ENCODE measurements at regions of chr20 and their contacts with region 1.

Region 1: GRCh38 chr20:37192137-37192854 is 12.9 kb upstream of the MROH8 start:
- DNase-seq: no peak
- ATAC-seq: peak; percentile 88
- H3K4me3 ChIP-seq: no peak overlapping the region
- H3K27ac ChIP-seq: no peak overlapping the region
- H3K4me1 ChIP-seq: peaks cover 17% of the 10 kb centered on the region
- H3K27me3 ChIP-seq: no peaks in the 10 kb centered on the region
- CTCF ChIP-seq: peak; percentile 80 to 92 (median 91)
- EP300 ChIP-seq: no peak
- POLR2A ChIP-seq: no peak
- RAD21 ChIP-seq: peak; percentile 17; the same call in 1 of the 2 replicates

Region 2: DNA sequence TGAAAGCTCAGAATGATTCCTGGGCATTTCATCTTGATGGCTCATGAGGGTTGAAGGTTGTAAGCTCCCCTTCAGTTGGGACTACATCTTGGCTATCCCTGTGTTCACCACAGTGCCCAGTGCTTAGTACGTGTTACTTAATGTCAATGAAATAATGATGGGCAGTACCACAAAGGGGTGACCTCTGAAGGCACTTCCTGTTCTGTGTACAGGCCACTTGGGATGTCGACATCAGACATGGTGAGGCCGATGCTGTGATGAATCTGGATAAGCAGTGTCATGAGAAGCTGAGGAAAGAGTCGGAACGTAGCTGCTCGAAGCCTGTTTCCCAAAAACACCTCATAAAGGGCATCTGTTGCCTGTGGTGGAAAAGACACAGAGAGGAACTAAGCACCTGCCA is 68.9 kb before region 1 on chr20:
- CTCF ChIA-PET with region 1: no interaction called
- POLR2A ChIA-PET with region 1: no interaction called
- RAD21 ChIA-PET with region 1: no interaction called
- SMC1A ChIA-PET with region 1: no interaction called
- in situ Hi-C with region 1: no loop called
- intact Hi-C with region 1: no loop called
- DNase-seq: no peak
- ATAC-seq: no peak
- H3K4me3 ChIP-seq: no peak overlapping the region
- H3K27ac ChIP-seq: no peak overlapping the region
- H3K4me1 ChIP-seq: no peaks in the 10 kb centered on the region
- H3K27me3 ChIP-seq: no peaks in the 10 kb centered on the region
- CTCF ChIP-seq: no peak
- EP300 ChIP-seq: no peak
- POLR2A ChIP-seq: no peak
- RAD21 ChIP-seq: no peak

Region 3: GRCh38 chr20:37178839-37179670 is 13.2 kb before region 1 on chr20 and contains the starts of genes MROH8 and RPN2:
- CTCF ChIA-PET with region 1: interaction called, 51 read pairs
- POLR2A ChIA-PET with region 1: interaction called, 22 read pairs
- RAD21 ChIA-PET with region 1: interaction called, 17 read pairs
- SMC1A ChIA-PET with region 1: interaction called, 21 read pairs
- in situ Hi-C with region 1: no loop called
- intact Hi-C with region 1: no loop called
- DNase-seq: peak; percentile 83
- ATAC-seq: peak; percentile 98
- H3K4me3 ChIP-seq: peak within 1 kb of the TSS; percentile 92
- H3K27ac ChIP-seq: peak within 1 kb of the TSS; percentile 98
- H3K4me1 ChIP-seq: peaks cover 7% of the 10 kb centered on the region
- H3K27me3 ChIP-seq: no peaks in the 10 kb centered on the region
- CTCF ChIP-seq: no peak
- EP300 ChIP-seq: 0 out of 4 replicates have a peak, but pooled peaks of 1 of the 2 experiments have one; percentile 10
- POLR2A ChIP-seq: peak; percentile 92
- RAD21 ChIP-seq: no peak
- polyA plus RNA-seq, gene MROH8: 0.16 to 0.93 TPM
- polyA plus RNA-seq, gene RPN2: 274 to 365 TPM

Region 4: DNA sequence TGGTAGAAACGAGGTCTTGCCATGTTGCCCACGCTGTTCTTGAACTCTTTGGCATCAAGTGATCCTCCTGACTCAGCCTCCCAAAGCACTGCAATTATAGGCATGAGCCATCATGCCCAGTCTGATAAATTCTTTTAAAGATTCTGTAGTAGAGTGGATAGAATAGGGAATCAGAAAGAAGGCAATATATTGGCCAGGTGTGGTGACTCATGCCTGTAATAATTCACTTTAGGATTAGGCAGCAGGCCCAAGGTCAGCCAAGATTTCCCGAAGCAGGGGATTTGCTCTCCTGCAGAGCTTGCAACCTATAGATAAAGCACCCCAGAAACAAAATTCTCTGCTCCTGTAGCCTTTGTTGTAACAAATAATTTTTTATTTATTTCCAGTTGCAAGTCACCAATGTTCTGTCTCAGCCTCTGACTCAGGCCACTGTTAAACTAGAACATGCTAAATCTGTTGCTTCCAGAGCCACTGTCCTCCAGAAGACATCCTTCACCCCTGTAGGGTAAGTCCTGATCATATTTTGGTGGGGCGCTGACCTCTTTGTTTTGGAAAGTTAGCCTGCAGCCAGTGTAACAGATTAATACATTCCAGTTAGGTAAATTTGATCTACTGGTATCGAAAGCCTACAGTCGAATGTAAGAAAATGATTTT is 17.5 kb after region 1 on chr20:
- CTCF ChIA-PET with region 1: interaction called, 15 read pairs
- POLR2A ChIA-PET with region 1: interaction called, 3 read pairs
- RAD21 ChIA-PET with region 1: interaction called, 4 read pairs
- SMC1A ChIA-PET with region 1: interaction called, 10 read pairs
- in situ Hi-C with region 1: no loop called
- intact Hi-C with region 1: no loop called
- DNase-seq: no peak
- ATAC-seq: no peak
- H3K4me3 ChIP-seq: no peak overlapping the region
- H3K27ac ChIP-seq: no peak overlapping the region
- H3K4me1 ChIP-seq: no peaks in the 10 kb centered on the region
- H3K27me3 ChIP-seq: no peaks in the 10 kb centered on the region
- CTCF ChIP-seq: no peak
- EP300 ChIP-seq: no peak
- POLR2A ChIP-seq: no peak
- RAD21 ChIP-seq: no peak

Region 5: DNA sequence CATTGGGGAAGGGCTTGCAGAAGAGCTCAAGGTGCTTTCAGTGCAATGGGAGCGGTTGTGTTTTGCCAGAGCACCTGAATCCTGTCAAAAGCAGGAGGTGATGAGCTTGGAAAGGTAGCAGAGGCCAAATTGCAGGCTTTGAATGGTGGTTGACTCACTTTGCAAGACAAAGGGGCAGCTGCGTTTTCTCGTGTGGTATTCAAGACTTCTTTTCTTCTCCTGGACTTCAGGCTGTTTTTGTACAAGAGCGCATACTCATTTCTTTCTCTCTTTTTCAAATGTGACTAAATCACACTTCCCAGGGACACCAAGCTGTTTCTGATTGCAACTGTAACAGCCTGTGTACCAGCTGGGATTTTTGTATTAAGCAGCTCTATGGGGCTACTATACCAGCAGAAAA is 37.1 kb after region 1 on chr20:
- CTCF ChIA-PET with region 1: interaction called, 5 read pairs
- POLR2A ChIA-PET with region 1: no interaction called
- RAD21 ChIA-PET with region 1: interaction called, 5 read pairs
- SMC1A ChIA-PET with region 1: interaction called, 10 read pairs
- in situ Hi-C with region 1: no loop called
- intact Hi-C with region 1: no loop called
- DNase-seq: no peak
- ATAC-seq: no peak
- H3K4me3 ChIP-seq: no peak overlapping the region
- H3K27ac ChIP-seq: no peak overlapping the region
- H3K4me1 ChIP-seq: no peaks in the 10 kb centered on the region
- H3K27me3 ChIP-seq: no peaks in the 10 kb centered on the region
- CTCF ChIP-seq: no peak
- EP300 ChIP-seq: no peak
- POLR2A ChIP-seq: no peak
- RAD21 ChIP-seq: no peak

Region 6: GRCh38 chr20:37298190-37298939 is 106.1 kb after region 1 on chr20:
- CTCF ChIA-PET with region 1: no interaction called
- POLR2A ChIA-PET with region 1: no interaction called
- RAD21 ChIA-PET with region 1: no interaction called
- SMC1A ChIA-PET with region 1: no interaction called
- in situ Hi-C with region 1: no loop called
- intact Hi-C with region 1: no loop called
- DNase-seq: no peak
- ATAC-seq: peak; percentile 64
- H3K4me3 ChIP-seq: no peak overlapping the region
- H3K27ac ChIP-seq: peak overlapping the region; percentile 69
- H3K4me1 ChIP-seq: peaks cover 46% of the 10 kb centered on the region
- H3K27me3 ChIP-seq: no peaks in the 10 kb centered on the region
- CTCF ChIP-seq: no peak
- EP300 ChIP-seq: no peak; a peak in 1 of 4 replicates
- POLR2A ChIP-seq: no peak
- RAD21 ChIP-seq: no peak

Region 7: DNA sequence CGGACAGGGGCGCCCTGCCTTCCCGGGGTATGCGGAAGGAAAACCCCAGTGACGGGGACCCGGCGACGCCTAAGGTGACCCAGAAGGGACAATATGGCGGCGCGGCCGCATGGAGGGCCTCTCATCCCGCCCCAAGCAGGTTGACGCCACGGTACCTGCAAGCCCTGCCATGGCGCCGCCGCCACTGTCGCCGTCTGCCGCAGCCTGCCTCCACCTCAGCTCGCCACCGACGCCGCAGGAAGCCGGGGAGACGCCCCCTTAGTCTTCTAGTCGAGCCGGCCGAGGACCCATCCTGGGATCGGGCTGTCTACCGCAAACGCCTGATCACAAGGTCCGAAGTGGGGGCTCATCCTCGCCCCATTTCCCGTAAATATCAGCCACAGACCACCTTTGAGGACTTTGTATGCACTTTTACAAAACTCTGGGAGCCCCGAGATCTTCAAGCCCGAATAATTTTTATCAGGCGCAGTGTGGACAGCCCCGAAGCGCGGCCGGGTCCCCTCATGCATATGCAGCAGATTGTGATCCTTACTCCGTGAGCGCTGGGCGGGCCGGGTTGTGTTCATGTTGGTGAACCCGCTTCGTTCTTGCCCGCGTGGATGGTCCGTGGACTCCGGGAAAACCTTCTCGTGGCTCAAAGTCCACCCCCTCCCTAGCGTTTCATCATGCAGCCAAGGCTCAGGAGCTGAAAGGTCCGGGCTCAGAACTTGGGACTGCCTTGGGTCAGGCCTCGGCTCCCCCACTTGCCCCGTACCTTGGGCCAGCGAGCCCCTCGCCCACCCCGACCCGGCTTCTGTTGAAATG is 335.5 kb after region 1 on chr20 and contains the start of gene BLCAP:
- CTCF ChIA-PET with region 1: interaction called, 200 read pairs
- POLR2A ChIA-PET with region 1: no interaction called
- RAD21 ChIA-PET with region 1: interaction called, 20 read pairs
- SMC1A ChIA-PET with region 1: interaction called, 33 read pairs
- in situ Hi-C with region 1: loop called (anchors 5 kb)
- intact Hi-C with region 1: no loop called
- DNase-seq: peak; percentile 69
- ATAC-seq: peak; percentile 92
- H3K4me3 ChIP-seq: peak within 1 kb of the TSS; percentile 89
- H3K27ac ChIP-seq: peak within 1 kb of the TSS; percentile 100
- H3K4me1 ChIP-seq: peaks cover 16% of the 10 kb centered on the region
- H3K27me3 ChIP-seq: no peaks in the 10 kb centered on the region
- CTCF ChIP-seq: no peak
- EP300 ChIP-seq: no peak
- POLR2A ChIP-seq: peak; percentile 98
- RAD21 ChIP-seq: no peak
- polyA plus RNA-seq, gene BLCAP: 24.6 to 37.7 TPM

Region 8: GRCh38 chr20:38210741-38211140 is 1018.4 kb after region 1 on chr20:
- CTCF ChIA-PET with region 1: no interaction called
- POLR2A ChIA-PET with region 1: no interaction called
- RAD21 ChIA-PET with region 1: no interaction called
- SMC1A ChIA-PET with region 1: no interaction called
- in situ Hi-C with region 1: no loop called
- intact Hi-C with region 1: no loop called
- DNase-seq: no peak
- ATAC-seq: no peak
- H3K4me3 ChIP-seq: no peak overlapping the region
- H3K27ac ChIP-seq: no peak overlapping the region
- H3K4me1 ChIP-seq: no peaks in the 10 kb centered on the region
- H3K27me3 ChIP-seq: no peaks in the 10 kb centered on the region; a peak in 1 of 4 replicates
- CTCF ChIP-seq: no peak
- EP300 ChIP-seq: no peak
- POLR2A ChIP-seq: no peak
- RAD21 ChIP-seq: no peak

Measured in GM12878 (cell line).